ENCODE measurements at regions of chr13 and their contacts with region 1.

Region 1: GRCh38 chr13:104163866-104164630 is 1097.8 kb upstream of the SLC10A2 start:
- DNase-seq: no peak
- ATAC-seq: no peak
- H3K4me3 ChIP-seq: no peak overlapping the region
- H3K27ac ChIP-seq: no peak overlapping the region
- H3K4me1 ChIP-seq: no peaks in the 10 kb centered on the region
- H3K27me3 ChIP-seq: no peaks in the 10 kb centered on the region
- CTCF ChIP-seq: no peak

Region 2: DNA sequence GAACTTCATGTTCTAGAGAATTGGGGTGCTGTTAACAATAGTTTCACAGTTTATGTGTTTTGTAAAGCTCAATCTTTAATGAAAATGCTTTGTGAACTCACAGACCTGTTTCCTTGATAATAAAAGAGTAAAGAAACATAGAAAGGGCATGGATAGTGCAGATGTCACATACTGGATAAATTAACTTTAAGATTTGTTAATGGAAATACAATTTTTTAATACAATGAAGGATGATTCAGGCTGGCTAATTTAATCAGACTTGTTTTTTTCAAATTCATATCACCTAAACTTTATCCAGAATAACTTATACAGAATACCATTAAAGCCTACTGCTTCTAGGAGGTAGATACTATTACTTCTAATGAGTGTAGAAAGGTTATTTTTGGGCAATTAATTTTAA is 64.3 kb before region 1 on chr13:
- intact Hi-C with region 1: loop called in 1 of 10 experiments (anchors 2 kb)
- DNase-seq: no peak
- ATAC-seq: no peak
- H3K4me3 ChIP-seq: no peak overlapping the region
- H3K27ac ChIP-seq: no peak overlapping the region
- H3K4me1 ChIP-seq: no peaks in the 10 kb centered on the region
- H3K27me3 ChIP-seq: no peaks in the 10 kb centered on the region
- CTCF ChIP-seq: no peak